PC-9 (cell line): ENCODE measurements at regions of chr22 and their contacts with region 1.

Region 1: GRCh38 chr22:35275580-35275979 is 18.3 kb downstream of the HMGXB4 start:
- DNase-seq: peak in 1 of 2 experiments; percentile 48
- H3K4me3 ChIP-seq: no peak overlapping the region
- H3K27ac ChIP-seq: peak overlapping the region; percentile 20; the same call in 1 of the 2 replicates
- H3K4me1 ChIP-seq: no peaks in the 10 kb centered on the region
- H3K27me3 ChIP-seq: no peaks in the 10 kb centered on the region
- CTCF ChIP-seq: no peak

Region 2: DNA sequence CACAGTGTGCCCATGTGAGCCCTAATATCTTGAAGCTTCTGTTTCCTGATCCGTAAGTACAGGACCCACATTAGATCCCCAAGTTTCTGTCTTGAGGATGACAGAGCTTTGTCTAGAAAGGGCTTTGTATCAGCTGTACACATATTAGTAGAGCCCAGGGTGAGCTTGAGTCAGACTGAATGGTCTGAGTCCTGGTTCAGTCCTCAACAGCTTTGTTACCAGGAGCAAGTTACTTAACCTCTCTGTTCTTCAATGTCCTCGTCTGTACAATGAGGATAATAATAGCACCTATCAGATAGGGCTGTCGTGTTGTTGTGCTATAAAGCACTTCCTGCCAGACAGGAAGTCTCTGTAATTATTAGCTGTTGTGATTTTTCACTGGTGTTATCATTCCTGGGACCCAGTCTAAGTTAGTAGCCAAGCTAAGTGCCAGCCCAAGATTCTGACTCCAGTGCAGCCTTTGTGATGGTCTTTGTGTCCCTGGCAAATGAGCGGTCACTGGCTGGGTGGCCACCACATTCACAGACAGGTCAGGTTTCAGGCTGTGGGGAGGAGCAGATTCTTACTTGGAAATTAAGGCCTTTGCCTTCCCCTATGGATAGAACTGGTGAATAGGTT is 30.9 kb after region 1 on chr22:
- CTCF ChIA-PET with region 1: interaction called, 3 read pairs
- POLR2A ChIA-PET with region 1: interaction called, 20 read pairs
- intact Hi-C with region 1: no loop called
- DNase-seq: no peak
- H3K4me3 ChIP-seq: no peak overlapping the region
- H3K27ac ChIP-seq: no peak overlapping the region
- H3K4me1 ChIP-seq: peaks cover 49% of the 10 kb centered on the region
- H3K27me3 ChIP-seq: no peaks in the 10 kb centered on the region
- CTCF ChIP-seq: no peak